OCI-LY7 (cell line): ENCODE measurements at regions of chr16 and their contacts with region 1.

Region 1: DNA sequence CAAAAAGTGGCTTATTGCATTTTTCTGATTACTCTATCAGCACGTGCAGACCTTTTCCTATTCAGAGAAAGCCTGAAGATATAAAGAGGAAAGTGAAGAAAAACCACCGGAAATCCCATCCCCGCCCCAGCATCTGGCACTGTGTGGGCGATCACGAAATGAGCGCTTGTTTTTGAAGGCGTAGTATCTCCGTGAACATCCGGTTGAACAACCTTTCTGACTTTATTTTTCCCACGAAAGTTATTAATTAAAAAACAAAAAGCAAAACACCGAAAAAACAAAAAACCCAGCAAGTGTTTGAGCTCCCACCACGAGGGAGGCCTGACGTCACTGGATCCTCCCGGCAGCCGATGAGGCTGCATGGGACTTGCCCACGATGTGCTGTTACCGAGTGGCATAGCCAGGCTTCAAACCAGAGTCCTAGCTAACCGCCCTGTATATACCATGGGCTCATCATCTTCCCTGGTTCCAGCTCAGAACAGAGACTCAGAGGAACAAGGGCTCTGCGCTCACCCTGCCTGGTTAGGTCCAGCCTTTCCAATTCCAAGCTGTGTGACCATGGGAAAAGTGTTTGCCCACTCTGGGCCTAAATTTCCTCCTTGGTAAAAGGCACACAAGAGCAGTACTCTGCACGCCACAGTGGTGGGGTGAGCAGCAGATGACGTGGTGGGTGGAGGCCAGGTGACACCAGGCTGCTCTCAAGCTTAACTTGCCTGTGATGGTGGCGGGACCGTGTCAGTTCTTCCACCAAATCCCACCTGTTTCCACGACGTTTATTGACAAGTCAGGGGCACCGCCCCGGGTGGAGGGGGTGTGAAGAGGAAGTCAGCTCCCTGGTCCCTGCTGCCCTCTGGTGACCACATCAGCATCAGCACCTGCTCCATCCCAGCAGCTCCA is 34.3 kb upstream of the IL21R start:
- DNase-seq: peak; percentile 85
- H3K4me3 ChIP-seq: peak overlapping the region; percentile 55
- H3K27ac ChIP-seq: peak overlapping the region; percentile 58
- H3K4me1 ChIP-seq: peaks cover 19% of the 10 kb centered on the region
- CTCF ChIP-seq: peak; percentile 82

Region 2: DNA sequence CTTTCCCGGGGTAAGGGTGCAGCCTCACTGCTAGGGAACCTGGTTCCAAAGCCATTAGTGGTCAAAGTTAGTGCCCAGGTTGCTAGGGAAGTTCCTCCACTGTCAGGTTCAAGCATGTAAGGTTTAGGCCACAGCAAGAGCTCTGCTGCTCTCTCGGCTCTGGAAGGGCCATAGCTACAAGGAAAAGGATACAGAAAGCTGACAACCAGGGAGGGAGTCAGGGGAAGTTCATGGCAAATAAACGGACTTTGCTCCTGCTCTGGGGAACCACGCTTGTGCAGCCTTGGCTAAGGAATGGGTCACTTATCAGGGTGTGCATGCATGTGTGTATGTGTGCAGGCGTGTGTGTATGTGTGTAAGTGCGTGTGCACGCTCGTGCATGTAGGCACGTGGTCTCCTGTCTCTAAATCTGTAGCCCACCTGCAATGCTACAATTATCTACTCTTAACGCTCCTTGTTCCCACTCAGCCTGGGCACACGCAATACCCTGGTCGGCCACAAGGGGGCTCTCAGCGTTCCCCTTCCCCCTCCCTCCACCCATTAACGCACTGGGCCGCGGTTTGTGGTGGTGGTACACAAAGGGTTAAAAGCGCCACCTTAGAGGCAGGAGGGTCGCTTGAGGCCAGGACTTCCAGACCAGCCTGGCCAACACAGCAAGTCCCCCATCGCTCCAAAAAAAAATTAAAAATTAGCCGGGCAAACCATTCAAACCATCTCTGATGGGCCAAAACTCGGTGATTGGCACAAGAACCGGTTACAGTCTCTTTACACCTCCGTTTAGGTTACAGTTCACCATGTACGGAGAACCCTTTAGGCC is 212.8 kb before region 1 on chr16:
- CTCF ChIA-PET with region 1: no interaction called
- POLR2A ChIA-PET with region 1: no interaction called
- intact Hi-C with region 1: loop called (anchors 1 kb)
- DNase-seq: peak; percentile 68
- H3K4me3 ChIP-seq: no peak overlapping the region
- H3K27ac ChIP-seq: no peak overlapping the region
- H3K4me1 ChIP-seq: peaks cover 12% of the 10 kb centered on the region
- CTCF ChIP-seq: peak; percentile 98

Region 3: DNA sequence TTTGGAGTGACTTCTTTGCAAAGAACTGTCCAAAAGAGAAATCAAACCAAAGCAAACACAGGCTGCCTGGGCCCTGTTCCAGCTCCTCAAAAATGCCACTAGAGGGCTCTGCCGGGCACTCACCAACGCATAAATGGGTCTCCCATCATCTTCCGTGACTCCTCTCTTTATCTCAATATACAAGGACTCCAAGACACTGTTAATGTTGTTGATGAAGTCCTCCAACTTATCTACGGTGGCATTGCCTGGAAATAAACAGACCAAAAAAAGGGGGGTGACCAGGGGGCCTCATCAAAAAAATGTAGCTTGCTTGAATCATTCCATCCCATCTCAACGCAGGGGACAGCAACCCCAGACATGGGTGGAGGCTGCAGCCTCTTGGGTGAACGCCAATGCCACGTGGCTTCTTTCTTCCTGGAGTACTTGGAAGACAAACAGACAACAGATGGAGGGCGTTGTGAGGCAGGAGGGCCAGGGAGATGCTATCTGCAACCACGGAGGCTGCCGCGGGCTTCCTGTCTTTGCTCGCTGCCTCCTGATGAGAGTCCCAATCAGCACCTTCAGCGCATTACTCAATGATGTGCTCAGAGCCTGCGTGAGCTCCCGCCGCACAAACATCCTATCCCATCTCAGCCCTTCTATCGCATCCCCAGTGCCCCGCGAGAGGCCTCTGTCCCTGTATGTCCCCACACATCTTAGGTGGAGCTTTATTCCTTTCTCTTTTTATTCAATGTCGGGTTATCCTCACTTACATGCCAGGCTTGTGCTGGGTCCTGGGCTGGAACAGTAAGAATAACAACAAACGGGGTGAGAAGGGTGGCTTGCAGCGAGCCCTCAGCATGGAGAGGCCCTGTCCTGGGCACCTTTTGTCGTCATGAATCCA is 132.4 kb before region 1 on chr16:
- CTCF ChIA-PET with region 1: interaction called, 7 read pairs
- POLR2A ChIA-PET with region 1: interaction called, 5 read pairs
- intact Hi-C with region 1: loop called (anchors 1 kb)
- DNase-seq: peak; percentile 78
- H3K4me3 ChIP-seq: no peak overlapping the region
- H3K27ac ChIP-seq: no peak overlapping the region
- H3K4me1 ChIP-seq: peaks cover 67% of the 10 kb centered on the region
- CTCF ChIP-seq: peak; percentile 99

Region 4: GRCh38 chr16:27313422-27314160 is 54.1 kb before region 1 on chr16 and contains the start of gene IL4R:
- CTCF ChIA-PET with region 1: no interaction called
- POLR2A ChIA-PET with region 1: no interaction called
- intact Hi-C with region 1: loop called (anchors 5 kb)
- DNase-seq: peak; percentile 72
- H3K4me3 ChIP-seq: peak within 1 kb of the TSS; percentile 93
- H3K27ac ChIP-seq: peak within 1 kb of the TSS; percentile 30
- H3K4me1 ChIP-seq: peaks cover 54% of the 10 kb centered on the region
- CTCF ChIP-seq: no peak
- total RNA-seq, gene IL4R: 33.0 and 82.8 TPM in 2 replicates